ENCODE measurements at regions of chr2 and their contacts with region 1.

Region 1: DNA sequence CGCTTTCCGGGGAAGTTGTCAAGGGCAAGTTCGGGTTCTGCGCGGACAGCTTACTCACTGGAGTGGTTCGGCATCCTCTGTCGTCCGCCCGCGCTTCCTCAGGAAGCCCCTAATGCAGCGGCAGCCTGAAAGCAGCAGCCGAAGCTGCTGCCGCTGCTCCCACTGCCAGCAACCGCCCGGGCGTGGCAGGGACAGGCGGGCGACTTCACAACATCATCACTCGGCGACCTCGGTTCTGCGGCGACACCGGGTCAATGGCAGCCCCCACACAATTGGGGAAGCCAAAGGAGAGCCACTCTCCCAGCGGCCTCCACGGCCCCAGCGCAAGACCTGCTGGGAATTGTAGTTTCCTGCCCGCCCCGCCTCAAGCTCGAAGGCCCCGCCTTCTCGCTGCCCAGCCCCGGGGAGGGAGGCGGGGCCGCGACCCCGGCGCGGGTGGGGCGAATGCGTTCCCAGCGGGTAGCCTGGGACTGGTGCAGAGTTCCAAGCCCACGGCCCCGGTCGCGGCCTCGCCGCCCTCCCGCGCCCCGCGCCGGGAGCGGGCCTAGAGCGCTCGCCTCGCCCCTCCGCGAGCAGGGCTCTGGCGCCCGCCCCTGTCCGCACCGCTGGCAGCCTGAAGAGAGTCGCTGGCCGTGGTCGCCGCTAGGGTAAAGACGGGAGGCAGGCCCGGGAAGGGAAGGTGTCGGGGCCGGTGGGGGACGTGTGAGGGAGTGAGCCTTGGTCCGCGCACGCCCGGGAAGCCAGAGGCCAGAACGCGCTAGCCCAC is at the starts of genes STRADB and TRAK2:
- DNase-seq: peak; percentile 95 to 97
- ATAC-seq: peak; percentile 98 to 99 (median 98)
- H3K4me3 ChIP-seq: peak within 1 kb of the TSS; percentile 73 to 90 (median 84)
- H3K27ac ChIP-seq: peak within 1 kb of the TSS; percentile 90 to 95 (median 94)
- H3K4me1 ChIP-seq: peaks cover under 1 to 61% (median 50%) of the 10 kb centered on the region in 9 donors
- H3K27me3 ChIP-seq: no peaks in the 10 kb centered on the region
- CTCF ChIP-seq: peak in 6 of 9 donors; percentile 9 to 61 (median 43)
- total RNA-seq, gene STRADB: 43.1 to 77.6 (median 58.6) TPM
- total RNA-seq, gene TRAK2: 124 to 190 (median 169) TPM

Region 2: DNA sequence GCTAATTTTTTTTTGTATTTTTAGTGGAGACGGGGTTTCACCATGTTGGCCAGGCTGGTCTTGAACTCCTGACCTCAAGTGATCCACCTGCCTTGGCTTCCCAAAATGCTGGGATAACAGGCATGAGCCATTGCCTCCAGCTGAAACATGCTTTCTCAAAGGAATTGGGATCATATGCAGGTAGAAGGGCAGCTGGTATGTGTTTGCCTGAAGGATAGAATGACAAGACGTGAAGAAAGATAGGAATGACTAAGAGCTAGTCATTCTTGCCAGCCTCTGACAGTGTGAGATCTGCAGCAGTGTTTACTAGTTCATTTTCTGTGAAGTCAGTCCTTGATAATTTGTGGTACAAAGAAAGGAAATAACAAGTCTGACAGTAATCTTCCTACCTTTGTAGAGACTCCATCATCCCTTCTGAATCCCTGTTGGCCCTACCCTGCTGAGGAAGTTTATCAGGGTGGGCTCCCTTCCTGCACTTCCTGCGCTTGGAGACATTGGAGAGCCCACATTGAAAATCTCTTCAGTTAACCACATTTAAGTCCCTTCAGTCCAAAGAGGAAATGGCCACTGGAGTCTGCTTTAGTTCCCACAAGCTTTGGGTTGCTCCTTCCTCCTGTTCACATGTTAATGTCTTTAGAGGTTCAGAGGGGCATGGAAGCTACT is 320.8 kb before region 1 on chr2:
- intact Hi-C with region 1: no loop called
- DNase-seq: peak in 1 of 2 donors; percentile 36
- ATAC-seq: peak; percentile 39 to 69 (median 56)
- H3K4me3 ChIP-seq: peak overlapping the region in 8 of 10 donors; percentile 4 to 36 (median 12)
- H3K27ac ChIP-seq: peak overlapping the region; percentile 82 to 100 (median 100)
- H3K4me1 ChIP-seq: peaks cover 30 to 100% (median 100%) of the 10 kb centered on the region in 9 donors
- H3K27me3 ChIP-seq: no peaks in the 10 kb centered on the region
- CTCF ChIP-seq: no peak

Region 3: GRCh38 chr2:201396595-201396994 is 54.9 kb before region 1 on chr2:
- intact Hi-C with region 1: loop called in 1 of 10 experiments (anchors 10 kb)
- DNase-seq: no peak
- ATAC-seq: no peak
- H3K4me3 ChIP-seq: no peak overlapping the region
- H3K27ac ChIP-seq: no peak overlapping the region
- H3K4me1 ChIP-seq: peaks cover 0 to 15% (median 10%) of the 10 kb centered on the region in 9 donors
- H3K27me3 ChIP-seq: no peaks in the 10 kb centered on the region
- CTCF ChIP-seq: no peak

Region 4: DNA sequence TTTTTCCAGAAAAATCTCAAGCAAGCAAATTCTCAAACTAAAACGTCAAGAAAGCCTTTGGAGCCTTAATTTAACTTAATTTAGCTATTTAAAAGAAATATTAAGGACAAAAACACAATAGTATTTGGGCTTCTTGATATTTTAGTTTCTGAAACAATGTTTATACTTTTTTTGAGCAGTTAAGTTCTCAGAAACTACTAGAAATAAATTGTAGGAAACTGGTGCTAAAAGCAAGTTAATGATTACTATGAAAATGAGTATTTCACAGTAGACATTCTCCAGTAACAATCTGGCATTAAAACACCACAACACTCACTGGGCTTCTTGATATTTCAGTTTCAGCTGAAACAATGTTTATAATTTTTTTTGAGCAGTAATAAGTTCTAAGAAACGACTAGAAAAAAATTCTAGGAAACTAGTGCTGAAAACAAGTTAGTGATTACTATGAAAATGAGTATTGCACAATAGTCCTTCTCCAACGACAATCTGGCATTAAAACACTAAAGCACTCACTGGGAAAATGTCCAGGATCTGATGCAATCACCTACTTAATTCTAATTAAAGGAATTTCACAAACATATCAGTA is 45.3 kb before region 1 on chr2:
- intact Hi-C with region 1: loop called in 6 of 10 experiments (anchors 1 to 5 kb)
- DNase-seq: peak in 1 of 2 donors; percentile 61
- ATAC-seq: peak in 7 of 8 donors; percentile 29 to 68 (median 52)
- H3K4me3 ChIP-seq: peak overlapping the region; percentile 2 to 40 (median 30)
- H3K27ac ChIP-seq: peak overlapping the region; percentile 54 to 87 (median 73)
- H3K4me1 ChIP-seq: peaks cover 0 to 95% (median 60%) of the 10 kb centered on the region in 9 donors
- H3K27me3 ChIP-seq: no peaks in the 10 kb centered on the region
- CTCF ChIP-seq: no peak

Region 5: GRCh38 chr2:201414099-201415023 is 37.1 kb before region 1 on chr2:
- intact Hi-C with region 1: loop called in 3 of 10 experiments (anchors 2 to 5 kb)
- DNase-seq: no peak
- ATAC-seq: peak; percentile 49 to 90 (median 80)
- H3K4me3 ChIP-seq: peak overlapping the region in 4 of 10 donors; percentile 16 to 31 (median 20)
- H3K27ac ChIP-seq: peak overlapping the region; percentile 24 to 90 (median 80)
- H3K4me1 ChIP-seq: peaks cover 5 to 78% (median 55%) of the 10 kb centered on the region in 9 donors
- H3K27me3 ChIP-seq: no peaks in the 10 kb centered on the region
- CTCF ChIP-seq: no peak

Region 6: GRCh38 chr2:201432038-201432620 is 19.3 kb before region 1 on chr2:
- intact Hi-C with region 1: loop called in 1 of 10 experiments (anchors 2 kb)
- DNase-seq: no peak
- ATAC-seq: peak; percentile 29 to 82 (median 68)
- H3K4me3 ChIP-seq: peak overlapping the region in 3 of 10 donors; percentile 15 to 30 (median 28)
- H3K27ac ChIP-seq: peak overlapping the region; percentile 47 to 88 (median 83)
- H3K4me1 ChIP-seq: peaks cover 7 to 67% (median 53%) of the 10 kb centered on the region in 9 donors
- H3K27me3 ChIP-seq: no peaks in the 10 kb centered on the region
- CTCF ChIP-seq: no peak

Measured in heart right ventricle (tissue), 16 donors.